Dorsolateral prefrontal cortex (tissue), 120 donors: ENCODE measurements at regions of chr2 and their contacts with region 1.

Region 1: DNA sequence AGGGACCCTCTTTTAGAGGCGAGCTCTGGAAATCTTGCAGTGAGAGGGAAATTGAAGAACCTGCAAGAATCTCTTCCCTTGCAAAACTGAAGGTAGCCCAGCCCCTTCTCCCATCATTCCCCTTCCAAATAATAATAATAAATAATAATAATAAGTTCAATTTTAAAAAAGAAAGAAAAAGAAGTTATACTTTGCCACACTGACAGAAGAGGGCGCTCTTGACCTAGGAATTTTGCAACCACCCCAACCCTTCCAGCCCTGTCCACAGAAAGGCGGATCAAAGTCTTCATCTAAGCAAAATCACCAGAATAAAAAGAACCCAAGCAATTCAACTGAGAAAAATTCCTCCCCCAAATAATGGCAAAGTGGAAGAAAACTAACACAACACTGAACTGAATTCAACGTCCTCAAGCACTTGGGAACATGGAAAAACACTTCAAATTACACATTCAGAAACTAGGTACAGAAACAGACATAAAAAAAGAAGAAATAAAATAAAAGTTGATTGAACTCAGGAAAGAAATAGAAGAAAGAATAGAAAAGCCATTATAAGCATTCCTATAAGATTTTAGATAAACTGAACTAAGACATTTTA is 98.9 kb upstream of the GLS start:
- DNase-seq: peak in 1 of 10 donors; percentile 36
- H3K4me3 ChIP-seq: no peak overlapping the region
- H3K27ac ChIP-seq: no peak overlapping the region
- H3K27me3 ChIP-seq: peaks cover 0 to 2% (median 0%) of the 10 kb centered on the region in 45 donors
- CTCF ChIP-seq: peak in 55 of 56 donors; percentile 45 to 81 (median 63)

Region 2: GRCh38 chr2:191030521-191031154 is 248.9 kb after region 1 on chr2:
- intact Hi-C with region 1: loop called (anchors 5 to 10 kb)
- DNase-seq: no peak
- H3K4me3 ChIP-seq: peak overlapping the region in 2 of 59 donors; percentile 12 to 23
- H3K27ac ChIP-seq: no peak overlapping the region
- H3K27me3 ChIP-seq: no peaks in the 10 kb centered on the region
- CTCF ChIP-seq: peak; percentile 37 to 77 (median 64)